ENCODE measurements at regions of chr7 and their contacts with region 1.

Region 1: DNA sequence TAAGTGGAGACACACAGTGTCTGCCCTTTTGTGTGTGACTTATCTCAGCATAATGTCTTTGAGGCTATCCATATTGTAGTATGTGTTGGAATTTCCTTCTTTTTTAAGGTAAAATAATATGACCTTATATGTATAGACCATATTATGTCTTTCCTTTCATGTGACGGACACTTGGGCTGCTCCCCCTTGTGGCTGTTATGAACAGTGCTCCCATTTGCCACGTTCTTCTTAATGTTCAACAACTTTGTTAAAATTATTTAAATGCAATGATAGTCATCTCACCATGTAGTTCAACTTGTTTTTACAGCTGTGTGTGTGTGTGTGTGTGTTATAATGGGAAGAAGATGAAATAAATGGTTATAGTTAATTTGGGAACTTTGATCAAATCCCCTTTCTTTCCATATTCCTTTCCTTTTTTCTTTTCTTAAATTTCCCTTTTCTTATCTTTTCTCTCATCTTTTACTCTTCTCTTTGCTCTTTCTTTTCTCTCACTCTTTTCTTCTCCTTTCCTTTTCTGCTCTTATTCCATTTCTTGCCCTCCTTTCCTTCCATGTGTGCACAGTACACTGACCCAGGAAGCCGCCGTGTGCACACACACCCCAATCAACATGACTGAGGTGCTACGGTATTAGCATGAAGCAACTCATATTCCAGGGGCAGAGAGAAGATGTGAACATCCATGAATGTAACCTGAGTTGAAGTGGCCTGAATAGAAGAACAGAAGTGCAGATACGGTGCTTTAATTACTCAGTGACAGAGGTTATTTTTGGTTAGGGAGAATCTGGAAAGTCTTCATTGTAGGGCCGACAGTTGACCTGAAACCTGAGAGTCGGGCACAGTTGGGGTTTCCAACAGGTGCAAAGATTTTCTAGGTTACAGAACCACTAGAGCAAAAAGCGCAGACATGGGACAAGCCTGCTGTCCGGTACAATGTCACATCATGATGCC is 596.7 kb downstream of the SDK1 start:
- DNase-seq: peak in 1 of 5 donors; percentile 40
- H3K4me3 ChIP-seq: no peak overlapping the region
- H3K27ac ChIP-seq: no peak overlapping the region
- H3K4me1 ChIP-seq: no peaks in the 10 kb centered on the region
- H3K27me3 ChIP-seq: no peaks in the 10 kb centered on the region
- CTCF ChIP-seq: peak in 2 of 3 donors; percentile 22 to 63
- EP300 ChIP-seq: no peak
- POLR2A ChIP-seq: no peak

Region 2: DNA sequence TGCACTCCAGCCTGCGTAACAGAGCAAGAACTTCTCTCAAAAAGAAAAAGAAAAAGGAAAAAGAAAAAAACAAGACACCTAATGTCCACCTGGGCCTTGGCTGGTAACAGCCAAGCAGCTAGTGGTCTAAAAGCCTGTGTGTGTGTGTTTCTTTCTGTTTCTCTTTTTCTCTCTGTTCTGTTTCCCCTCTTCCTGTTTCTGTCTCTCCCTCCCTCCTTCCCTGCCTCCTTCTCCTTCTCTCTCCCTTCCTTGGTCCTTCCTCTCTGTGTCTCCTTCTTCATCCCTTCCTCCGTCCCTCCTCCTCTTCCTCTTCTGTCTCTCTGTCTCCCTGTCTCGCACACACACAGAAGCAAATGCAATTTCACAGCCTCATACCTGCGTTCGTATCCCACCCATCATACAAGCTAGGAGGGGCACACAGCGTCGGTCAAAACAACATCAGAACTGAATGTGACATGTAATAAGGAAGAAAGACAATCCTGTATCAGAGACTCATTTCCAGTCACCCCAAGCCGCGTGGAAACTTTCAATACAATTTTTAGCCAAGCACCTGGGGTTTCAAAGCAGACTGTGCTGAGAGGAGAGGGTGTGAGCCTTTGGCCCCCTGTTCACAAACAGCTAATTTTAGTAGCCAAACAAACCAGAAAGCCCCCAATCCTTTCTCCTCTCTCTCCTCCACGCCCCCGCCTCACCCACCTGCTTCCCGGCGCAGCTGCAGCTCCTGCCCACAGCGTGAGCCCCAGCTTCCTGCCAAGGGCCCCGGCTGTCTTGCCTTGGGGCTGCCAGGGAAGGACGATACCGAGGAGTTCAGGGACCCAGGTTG is 1003.4 kb before region 1 on chr7:
- intact Hi-C with region 1: loop called in 1 of 4 experiments (anchors 10 kb)
- DNase-seq: peak in 1 of 5 donors; percentile 33
- H3K4me3 ChIP-seq: no peak overlapping the region
- H3K27ac ChIP-seq: no peak overlapping the region
- H3K4me1 ChIP-seq: peaks cover 2% of the 10 kb centered on the region
- H3K27me3 ChIP-seq: no peaks in the 10 kb centered on the region
- CTCF ChIP-seq: no peak
- EP300 ChIP-seq: no peak
- POLR2A ChIP-seq: no peak

Measured in ovary (tissue), 10 donors.